ENCODE measurements at regions of chr14 and their contacts with region 1.

Region 1: DNA sequence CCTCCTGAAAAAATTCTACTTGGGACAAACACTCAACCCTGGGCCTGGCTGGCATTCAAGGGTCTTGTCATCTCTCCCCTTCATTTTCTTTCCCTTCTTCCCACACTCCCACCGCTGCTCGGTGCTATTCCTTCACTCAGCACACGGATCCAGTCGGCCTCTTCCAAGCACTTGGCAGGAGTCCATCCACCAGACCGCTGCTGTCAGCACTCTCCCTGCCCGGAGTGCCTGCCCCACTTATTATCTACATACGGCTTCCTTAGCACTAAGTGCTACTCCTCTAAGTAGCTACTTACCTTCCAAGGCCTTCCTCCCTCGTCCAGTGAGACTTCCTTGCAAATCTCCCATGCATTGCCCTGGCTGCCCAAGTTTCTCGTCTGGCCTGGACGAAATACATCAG is 29.8 kb downstream of the CALM1 start:
- DNase-seq: no peak
- ATAC-seq: no peak
- H3K4me3 ChIP-seq: no peak overlapping the region
- H3K27ac ChIP-seq: no peak overlapping the region
- H3K4me1 ChIP-seq: no peaks in the 10 kb centered on the region
- H3K27me3 ChIP-seq: no peaks in the 10 kb centered on the region; a peak in 1 of 4 replicates
- CTCF ChIP-seq: no peak
- EP300 ChIP-seq: no peak
- POLR2A ChIP-seq: no peak
- RAD21 ChIP-seq: no peak

Region 2: DNA sequence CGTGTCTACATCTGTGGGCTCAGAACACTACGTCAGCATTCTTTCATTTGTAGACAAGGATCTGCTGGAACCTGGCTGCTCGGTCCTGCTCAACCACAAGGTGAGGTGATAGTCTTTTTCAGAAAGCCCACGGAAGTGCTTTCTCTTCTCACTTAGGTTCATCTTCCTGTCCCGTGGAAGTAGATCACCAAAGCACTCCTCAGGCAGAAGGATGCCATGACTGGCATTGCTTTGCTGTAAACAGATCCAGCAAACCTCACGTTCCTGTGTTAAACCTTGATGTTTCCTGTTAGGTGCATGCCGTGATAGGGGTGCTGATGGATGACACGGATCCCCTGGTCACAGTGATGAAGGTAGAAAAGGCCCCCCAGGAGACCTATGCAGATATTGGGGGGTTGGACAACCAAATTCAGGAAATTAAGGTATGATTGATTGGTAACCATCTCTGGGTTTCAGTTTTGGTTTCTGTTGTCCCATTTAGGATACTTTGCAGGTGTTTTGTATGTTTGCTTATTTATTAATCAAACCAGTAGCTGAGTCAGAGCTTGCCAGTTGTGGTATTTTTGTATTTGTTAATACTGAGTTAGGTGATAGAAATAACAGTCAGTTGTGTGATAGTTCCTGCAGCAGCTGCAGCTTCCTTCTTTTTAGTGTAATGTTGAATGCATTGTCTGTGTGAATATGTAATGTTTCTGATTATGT is 162.8 kb before region 1 on chr14:
- CTCF ChIA-PET with region 1: no interaction called
- POLR2A ChIA-PET with region 1: no interaction called
- RAD21 ChIA-PET with region 1: no interaction called
- SMC1A ChIA-PET with region 1: no interaction called
- in situ Hi-C with region 1: no loop called
- intact Hi-C with region 1: no loop called
- DNase-seq: no peak
- ATAC-seq: peak; percentile 78
- H3K4me3 ChIP-seq: no peak overlapping the region
- H3K27ac ChIP-seq: 0 out of 2 replicates have a peak overlapping the region, but pooled peaks have one; percentile 1
- H3K4me1 ChIP-seq: 0 out of 2 replicates have a peak, but pooled peaks cover 3% of the 10 kb centered on the region
- H3K27me3 ChIP-seq: no peaks in the 10 kb centered on the region
- CTCF ChIP-seq: no peak
- EP300 ChIP-seq: no peak
- POLR2A ChIP-seq: no peak
- RAD21 ChIP-seq: no peak

Region 3: DNA sequence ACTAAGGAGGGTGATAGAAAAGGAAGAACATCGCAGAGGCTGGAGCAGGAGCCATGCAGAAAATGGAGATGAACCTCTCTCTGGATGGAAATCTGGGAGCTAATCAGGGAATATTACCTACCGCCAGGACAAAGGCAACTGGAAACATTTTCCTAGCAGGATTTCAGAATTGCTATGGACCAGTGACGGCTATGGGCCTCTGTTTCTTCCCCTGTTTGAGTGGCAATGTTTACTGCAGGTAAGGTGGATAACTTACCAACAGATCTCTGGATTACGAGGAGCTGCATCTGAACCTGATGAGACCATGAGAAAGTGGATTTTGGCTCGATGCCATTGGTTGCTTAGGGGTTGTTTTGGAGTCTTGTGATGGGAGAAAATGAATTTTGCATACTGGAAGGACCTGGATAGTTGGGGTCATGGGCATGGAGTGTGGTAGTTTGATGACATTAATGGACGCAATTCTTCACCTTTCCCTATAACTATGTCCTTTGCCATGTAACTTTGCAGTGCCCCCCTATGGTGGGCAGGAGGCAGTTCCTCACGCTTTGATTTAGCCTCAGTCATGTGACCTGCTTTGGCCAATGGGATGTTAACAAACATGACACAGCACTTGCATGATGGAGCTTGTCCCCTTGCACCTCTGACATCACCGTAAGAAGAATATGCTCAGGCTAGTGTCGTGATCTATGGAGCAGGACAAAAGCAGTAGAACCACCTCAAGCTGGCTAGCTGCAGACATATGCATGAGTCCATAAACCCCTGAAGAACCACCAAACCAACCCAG is 21.2 kb after region 1 on chr14:
- CTCF ChIA-PET with region 1: no interaction called
- POLR2A ChIA-PET with region 1: no interaction called
- RAD21 ChIA-PET with region 1: no interaction called
- SMC1A ChIA-PET with region 1: no interaction called
- in situ Hi-C with region 1: no loop called
- intact Hi-C with region 1: no loop called
- DNase-seq: no peak
- ATAC-seq: no peak
- H3K4me3 ChIP-seq: no peak overlapping the region
- H3K27ac ChIP-seq: no peak overlapping the region
- H3K4me1 ChIP-seq: peaks cover 13% of the 10 kb centered on the region
- H3K27me3 ChIP-seq: no peaks in the 10 kb centered on the region
- CTCF ChIP-seq: no peak
- EP300 ChIP-seq: no peak
- POLR2A ChIP-seq: no peak
- RAD21 ChIP-seq: no peak

Region 4: DNA sequence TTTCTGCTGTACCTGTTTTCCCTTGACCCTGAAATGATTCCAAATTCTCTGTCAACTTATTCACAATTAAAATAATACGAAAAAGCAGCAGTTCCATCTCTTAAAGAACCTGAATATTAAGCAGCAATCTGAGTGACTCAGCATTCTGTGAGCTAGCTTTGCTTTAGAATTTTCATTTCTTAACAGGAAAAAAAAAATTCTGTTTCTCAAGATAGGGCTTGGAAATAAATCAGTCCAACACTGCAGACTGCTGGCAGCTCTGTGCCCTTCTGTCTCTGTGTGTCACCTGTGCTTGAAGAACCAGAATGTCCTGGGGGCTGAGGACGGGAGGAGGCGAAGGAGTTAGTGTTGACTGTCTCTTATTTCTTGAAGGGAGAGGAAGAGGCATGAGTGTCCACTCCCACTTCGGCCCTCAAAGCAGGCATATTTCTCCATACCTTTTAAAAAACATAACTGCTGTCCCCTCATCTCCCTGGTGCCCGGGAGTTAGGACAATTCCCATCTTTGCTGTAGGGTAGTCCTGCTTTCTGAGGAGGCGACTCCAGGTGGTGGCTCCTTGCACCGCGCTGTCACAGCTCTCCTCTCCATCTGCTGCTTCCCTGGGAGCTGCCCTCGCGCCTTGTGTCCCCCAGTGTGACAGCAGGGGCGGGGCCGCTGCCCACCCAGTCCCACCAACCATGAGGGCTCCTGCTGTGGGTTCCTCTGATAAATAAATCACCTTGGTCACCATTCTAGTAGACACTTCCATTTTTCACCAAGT is 173.3 kb after region 1 on chr14:
- CTCF ChIA-PET with region 1: no interaction called
- POLR2A ChIA-PET with region 1: no interaction called
- RAD21 ChIA-PET with region 1: no interaction called
- SMC1A ChIA-PET with region 1: no interaction called
- in situ Hi-C with region 1: no loop called
- intact Hi-C with region 1: loop called (anchors 10 kb)
- DNase-seq: no peak
- ATAC-seq: no peak
- H3K4me3 ChIP-seq: no peak overlapping the region
- H3K27ac ChIP-seq: no peak overlapping the region
- H3K4me1 ChIP-seq: no peaks in the 10 kb centered on the region
- H3K27me3 ChIP-seq: no peaks in the 10 kb centered on the region; a peak in 2 of 4 replicates
- CTCF ChIP-seq: no peak
- EP300 ChIP-seq: no peak
- POLR2A ChIP-seq: no peak
- RAD21 ChIP-seq: no peak